Esophagus muscularis mucosa (tissue), 4 donors: ENCODE measurements at regions of chr20 and their contacts with region 1.

Region 1: GRCh38 chr20:56171087-56172012 is 77.2 kb upstream of the MC3R start:
- DNase-seq: no peak
- H3K4me3 ChIP-seq: no peak overlapping the region
- H3K27ac ChIP-seq: no peak overlapping the region
- H3K4me1 ChIP-seq: no peaks in the 10 kb centered on the region
- H3K27me3 ChIP-seq: no peaks in the 10 kb centered on the region
- CTCF ChIP-seq: peak in 2 of 3 experiments; percentile 28 to 47
- EP300 ChIP-seq: no peak
- POLR2A ChIP-seq: no peak

Region 2: GRCh38 chr20:55415567-55416142 is 755.7 kb before region 1 on chr20:
- intact Hi-C with region 1: loop called (anchors 10 kb)
- DNase-seq: no peak
- H3K4me3 ChIP-seq: no peak overlapping the region
- H3K27ac ChIP-seq: no peak overlapping the region
- H3K4me1 ChIP-seq: peaks cover 0 to 13% (median 8%) of the 10 kb centered on the region in 4 donors
- H3K27me3 ChIP-seq: no peaks in the 10 kb centered on the region
- CTCF ChIP-seq: peak in 2 of 3 experiments; percentile 42 to 44
- EP300 ChIP-seq: no peak
- POLR2A ChIP-seq: no peak